ENCODE measurements at regions of chr12 and their contacts with region 1.

Region 1: GRCh38 chr12:14257734-14258574 is 107.5 kb upstream of the ATF7IP start:
- DNase-seq: peak; percentile 95
- H3K4me3 Mint-ChIP-seq: peak overlapping the region; percentile 81
- H3K27ac Mint-ChIP-seq: peak overlapping the region; percentile 99
- H3K4me1 Mint-ChIP-seq: peaks cover 45% of the 10 kb centered on the region
- H3K27me3 Mint-ChIP-seq: no peaks in the 10 kb centered on the region

Region 2: DNA sequence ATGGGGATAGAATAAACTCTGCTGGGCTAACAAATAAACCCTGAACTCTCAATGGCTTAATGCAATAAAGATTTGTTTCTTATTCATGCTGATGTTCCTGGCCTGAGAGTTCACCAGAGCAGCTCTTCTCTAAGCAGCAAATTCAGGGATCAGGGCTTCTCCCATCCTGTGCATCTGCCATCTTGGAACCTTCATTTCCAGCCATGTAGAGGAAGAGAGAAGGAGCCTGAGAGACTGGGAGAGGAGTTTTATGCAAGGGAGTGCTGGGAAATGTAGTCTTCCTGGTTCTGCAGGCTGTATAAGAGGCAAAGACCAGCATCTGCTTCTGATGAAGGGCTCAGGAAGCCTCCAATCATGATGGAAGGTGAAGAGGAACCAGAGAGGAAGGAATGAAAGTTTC is 1493.1 kb before region 1 on chr12:
- intact Hi-C with region 1: no loop called
- DNase-seq: no peak
- H3K4me3 Mint-ChIP-seq: no peak overlapping the region
- H3K27ac Mint-ChIP-seq: no peak overlapping the region
- H3K4me1 Mint-ChIP-seq: no peaks in the 10 kb centered on the region
- H3K27me3 Mint-ChIP-seq: no peaks in the 10 kb centered on the region

Region 3: DNA sequence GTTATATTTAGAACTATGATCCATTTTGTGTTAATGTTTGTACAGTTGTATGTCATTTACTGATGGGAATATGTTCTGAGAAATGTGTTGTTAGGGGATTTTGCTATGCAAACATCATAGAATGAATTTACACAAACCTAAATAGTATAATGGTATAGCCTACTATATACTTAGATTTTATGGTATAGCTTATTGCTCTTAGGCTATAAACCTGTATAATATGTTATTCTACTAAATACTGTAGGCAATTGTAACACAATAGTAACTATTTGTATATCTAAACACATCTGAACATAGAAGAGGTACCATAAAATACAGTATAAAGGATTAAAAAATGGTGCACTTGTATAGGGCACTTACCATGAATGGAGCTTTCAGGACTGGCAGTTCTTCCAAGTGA is 171.1 kb before region 1 on chr12:
- intact Hi-C with region 1: no loop called
- DNase-seq: no peak
- H3K4me3 Mint-ChIP-seq: no peak overlapping the region
- H3K27ac Mint-ChIP-seq: no peak overlapping the region
- H3K4me1 Mint-ChIP-seq: no peaks in the 10 kb centered on the region
- H3K27me3 Mint-ChIP-seq: no peaks in the 10 kb centered on the region

Region 4: GRCh38 chr12:14216405-14217294 is 41.3 kb before region 1 on chr12:
- intact Hi-C with region 1: loop called (anchors 1 kb)
- DNase-seq: no peak
- H3K4me3 Mint-ChIP-seq: peak overlapping the region; percentile 23
- H3K27ac Mint-ChIP-seq: no peak overlapping the region
- H3K4me1 Mint-ChIP-seq: peaks cover 13% of the 10 kb centered on the region
- H3K27me3 Mint-ChIP-seq: no peaks in the 10 kb centered on the region

Region 5: DNA sequence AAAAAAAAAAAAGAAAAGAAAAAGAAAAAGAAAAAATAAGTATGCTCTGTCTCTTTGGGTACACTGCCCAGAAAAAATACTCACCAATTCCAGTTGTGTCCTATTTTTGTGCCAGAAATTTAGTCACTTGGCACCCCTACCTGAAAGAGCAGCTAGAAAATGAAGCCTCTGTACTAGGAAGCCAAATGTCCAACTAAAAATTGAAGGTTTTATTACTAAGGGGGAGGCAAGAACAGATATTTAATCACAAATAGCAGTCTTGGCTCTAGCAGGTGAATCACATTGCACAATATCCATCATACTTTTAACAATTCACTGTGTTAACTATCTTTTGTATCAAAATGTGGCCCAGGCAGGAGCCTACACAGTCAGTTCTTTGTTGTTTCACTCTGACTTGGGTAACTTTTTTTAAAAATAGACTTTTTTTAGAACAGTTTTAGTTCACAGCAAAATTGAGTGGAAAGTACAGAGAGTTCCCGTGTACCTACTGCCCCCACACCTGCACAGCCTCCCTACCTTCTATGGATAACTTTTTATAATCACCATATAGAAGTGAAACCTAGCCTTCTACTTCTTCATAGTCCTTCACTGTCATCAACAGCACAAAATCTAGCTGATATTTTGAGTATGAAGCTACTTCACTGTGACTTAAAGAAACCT is 20.5 kb after region 1 on chr12:
- intact Hi-C with region 1: loop called (anchors 2 kb)
- DNase-seq: no peak
- H3K4me3 Mint-ChIP-seq: no peak overlapping the region
- H3K27ac Mint-ChIP-seq: peak overlapping the region; percentile 51
- H3K4me1 Mint-ChIP-seq: peaks cover 10% of the 10 kb centered on the region
- H3K27me3 Mint-ChIP-seq: no peaks in the 10 kb centered on the region

Region 6: GRCh38 chr12:14384783-14385638 is 127.1 kb after region 1 on chr12:
- intact Hi-C with region 1: loop called (anchors 1 kb)
- DNase-seq: peak; percentile 91
- H3K4me3 Mint-ChIP-seq: peak overlapping the region; percentile 77
- H3K27ac Mint-ChIP-seq: peak overlapping the region; percentile 84
- H3K4me1 Mint-ChIP-seq: peaks cover 44% of the 10 kb centered on the region
- H3K27me3 Mint-ChIP-seq: no peaks in the 10 kb centered on the region

Region 7: DNA sequence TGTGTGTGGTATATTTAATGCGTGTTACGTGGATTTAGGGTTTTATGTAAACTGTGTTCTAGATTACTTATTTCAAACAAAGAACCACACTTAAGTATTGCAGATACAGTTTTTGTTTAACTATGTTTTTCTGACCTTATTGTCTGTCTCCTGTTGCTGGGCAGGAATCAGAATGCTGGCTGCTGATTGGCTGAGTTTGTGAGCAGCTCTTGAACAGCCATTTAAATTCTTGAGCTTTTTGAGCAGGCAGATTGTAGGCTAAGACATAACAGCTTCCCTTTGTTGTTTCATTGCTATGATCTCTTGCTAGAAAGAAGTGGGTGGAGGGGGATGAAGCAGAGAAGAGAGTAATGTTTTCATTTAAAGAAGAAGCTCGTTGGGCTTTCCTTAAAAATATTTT is 159.8 kb after region 1 on chr12:
- intact Hi-C with region 1: loop called (anchors 1 kb)
- DNase-seq: peak; percentile 90
- H3K4me3 Mint-ChIP-seq: peak overlapping the region; percentile 62
- H3K27ac Mint-ChIP-seq: peak overlapping the region; percentile 85
- H3K4me1 Mint-ChIP-seq: peaks cover 37% of the 10 kb centered on the region
- H3K27me3 Mint-ChIP-seq: no peaks in the 10 kb centered on the region

Region 8: GRCh38 chr12:14629832-14630710 is 372.1 kb after region 1 on chr12:
- intact Hi-C with region 1: no loop called
- DNase-seq: peak; percentile 90
- H3K4me3 Mint-ChIP-seq: no peak overlapping the region
- H3K27ac Mint-ChIP-seq: no peak overlapping the region
- H3K4me1 Mint-ChIP-seq: no peaks in the 10 kb centered on the region
- H3K27me3 Mint-ChIP-seq: peaks cover 23% of the 10 kb centered on the region

Region 9: DNA sequence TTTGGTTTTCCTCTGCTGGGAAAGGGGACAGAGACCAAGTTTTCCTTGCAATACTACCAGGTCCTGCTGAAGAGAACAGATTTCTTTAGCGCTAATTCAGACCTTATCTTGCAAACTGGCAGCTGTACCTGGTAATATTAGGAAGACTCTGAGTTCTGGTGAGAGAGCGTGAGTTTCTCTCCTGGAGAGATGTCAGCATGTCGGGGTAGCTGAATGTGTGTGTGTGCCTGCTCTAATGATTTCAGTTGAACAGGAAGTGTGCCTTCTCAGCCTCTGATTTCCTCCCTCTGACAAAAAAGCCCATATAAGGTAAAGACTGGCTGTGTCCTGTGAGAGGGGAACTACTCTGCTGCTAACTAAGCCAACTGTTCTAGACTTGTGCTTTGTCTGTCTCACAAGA is 690.7 kb after region 1 on chr12:
- intact Hi-C with region 1: loop called (anchors 5 kb)
- DNase-seq: peak; percentile 89
- H3K4me3 Mint-ChIP-seq: peak overlapping the region; percentile 79
- H3K27ac Mint-ChIP-seq: peak overlapping the region; percentile 95
- H3K4me1 Mint-ChIP-seq: peaks cover 74% of the 10 kb centered on the region
- H3K27me3 Mint-ChIP-seq: no peaks in the 10 kb centered on the region